Dorsolateral prefrontal cortex (tissue), 120 donors: ENCODE measurements at regions of chr9 and their contacts with region 1.

Region 1: GRCh38 chr9:105712773-105713172 is 18.4 kb downstream of the TMEM38B start:
- DNase-seq: no peak
- H3K4me3 ChIP-seq: no peak overlapping the region
- H3K27ac ChIP-seq: no peak overlapping the region
- H3K27me3 ChIP-seq: no peaks in the 10 kb centered on the region
- CTCF ChIP-seq: no peak

Region 2: GRCh38 chr9:105608721-105609598 is 103.8 kb before region 1 on chr9:
- intact Hi-C with region 1: loop called in 1 of 2 experiments (anchors 10 kb)
- DNase-seq: no peak
- H3K4me3 ChIP-seq: no peak overlapping the region
- H3K27ac ChIP-seq: no peak overlapping the region
- H3K27me3 ChIP-seq: no peaks in the 10 kb centered on the region
- CTCF ChIP-seq: peak; percentile 31 to 83 (median 68)

Region 3: GRCh38 chr9:105656131-105656921 is 56.4 kb before region 1 on chr9:
- intact Hi-C with region 1: loop called in 1 of 2 experiments (anchors 5 kb)
- DNase-seq: peak in 3 of 10 donors; percentile 7 to 50 (median 16)
- H3K4me3 ChIP-seq: peak overlapping the region; percentile 18 to 83 (median 70)
- H3K27ac ChIP-seq: no peak overlapping the region
- H3K27me3 ChIP-seq: peaks cover 0 to 33% (median 6%) of the 10 kb centered on the region in 45 donors
- CTCF ChIP-seq: peak in 48 of 56 donors; percentile 13 to 64 (median 36)